ENCODE measurements at regions of chr1 and their contacts with region 1.

Region 1: GRCh38 chr1:226223786-226224244 is 351 bp downstream of the MIXL1 start:
- DNase-seq: peak; percentile 60
- H3K4me3 ChIP-seq: peak overlapping the region in 3 of 4 donors; percentile 35 to 56 (median 42)
- H3K27ac ChIP-seq: peak overlapping the region in 1 of 4 donors; percentile 10
- H3K4me1 ChIP-seq: peaks cover 0 to 10% (median 8%) of the 10 kb centered on the region in 4 donors
- H3K27me3 ChIP-seq: peaks cover 38% of the 10 kb centered on the region
- CTCF ChIP-seq: no peak
- EP300 ChIP-seq: no peak
- POLR2A ChIP-seq: no peak

Region 2: DNA sequence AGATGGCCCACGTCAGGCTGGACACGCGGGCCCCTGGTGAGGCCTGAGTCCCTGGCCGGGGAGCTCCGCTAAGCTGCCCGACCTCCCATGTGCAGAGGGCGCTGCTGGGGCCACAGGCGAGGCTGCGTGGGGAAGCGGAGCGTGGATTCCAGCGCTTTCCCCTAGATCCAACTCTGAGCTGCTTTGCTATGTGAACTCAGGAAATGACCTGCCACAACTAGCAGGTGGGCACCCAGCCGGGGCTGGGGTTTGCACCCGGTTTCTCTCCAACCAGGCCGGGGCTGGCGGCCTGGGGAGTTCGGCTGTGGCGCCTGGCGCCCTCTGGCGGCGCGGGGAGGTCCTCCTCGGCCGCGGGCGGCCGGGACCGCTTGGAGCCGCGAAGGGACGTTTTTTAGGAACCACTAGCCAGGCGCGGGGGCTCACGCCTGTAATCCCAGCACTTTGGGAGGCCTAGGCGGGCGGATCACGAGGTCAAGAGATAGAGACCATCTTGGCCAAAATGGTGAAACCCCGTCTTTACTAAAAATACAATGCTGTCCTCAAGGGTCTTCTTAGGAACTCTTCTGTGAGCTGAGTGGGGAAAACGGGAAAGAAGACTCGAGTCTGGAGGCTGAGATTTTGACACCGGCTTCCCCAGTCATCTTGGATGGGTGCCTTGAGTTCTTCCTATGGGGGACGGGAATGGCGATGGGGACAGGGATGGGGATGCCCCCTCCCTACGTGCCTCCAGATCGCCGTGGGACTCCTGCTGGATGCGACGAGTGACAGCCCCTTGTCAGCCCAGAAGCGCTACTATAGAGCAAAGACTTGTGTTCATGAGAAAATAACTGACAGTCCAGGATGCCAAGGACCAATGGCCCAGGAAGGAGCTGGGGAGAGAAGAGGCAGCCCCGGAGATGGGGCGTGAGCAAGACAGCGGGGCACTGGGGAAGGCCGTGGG is 312.4 kb before region 1 on chr1:
- in situ Hi-C with region 1: no loop called
- intact Hi-C with region 1: no loop called
- DNase-seq: peak; percentile 73
- H3K4me3 ChIP-seq: peak overlapping the region in 2 of 4 donors; percentile 6 to 23
- H3K27ac ChIP-seq: peak overlapping the region in 2 of 4 donors; percentile 33 to 37
- H3K4me1 ChIP-seq: peaks cover 0 to 18% (median 13%) of the 10 kb centered on the region in 4 donors
- H3K27me3 ChIP-seq: no peaks in the 10 kb centered on the region
- CTCF ChIP-seq: peak; percentile 93 to 97 (median 97)
- EP300 ChIP-seq: no peak
- POLR2A ChIP-seq: no peak

Region 3: GRCh38 chr1:226349801-226350518 is 126.1 kb after region 1 on chr1:
- in situ Hi-C with region 1: loop called in 1 of 4 experiments (anchors 25 kb)
- intact Hi-C with region 1: no loop called
- DNase-seq: no peak
- H3K4me3 ChIP-seq: no peak overlapping the region
- H3K27ac ChIP-seq: peak overlapping the region in 3 of 4 donors; percentile 17 to 61 (median 30)
- H3K4me1 ChIP-seq: peaks cover 0 to 13% (median 10%) of the 10 kb centered on the region in 4 donors
- H3K27me3 ChIP-seq: no peaks in the 10 kb centered on the region
- CTCF ChIP-seq: no peak
- EP300 ChIP-seq: no peak
- POLR2A ChIP-seq: no peak